CD4-positive, alpha-beta T cell (primary cell): ENCODE measurements at regions of chr2 and their contacts with region 1.

Region 1: DNA sequence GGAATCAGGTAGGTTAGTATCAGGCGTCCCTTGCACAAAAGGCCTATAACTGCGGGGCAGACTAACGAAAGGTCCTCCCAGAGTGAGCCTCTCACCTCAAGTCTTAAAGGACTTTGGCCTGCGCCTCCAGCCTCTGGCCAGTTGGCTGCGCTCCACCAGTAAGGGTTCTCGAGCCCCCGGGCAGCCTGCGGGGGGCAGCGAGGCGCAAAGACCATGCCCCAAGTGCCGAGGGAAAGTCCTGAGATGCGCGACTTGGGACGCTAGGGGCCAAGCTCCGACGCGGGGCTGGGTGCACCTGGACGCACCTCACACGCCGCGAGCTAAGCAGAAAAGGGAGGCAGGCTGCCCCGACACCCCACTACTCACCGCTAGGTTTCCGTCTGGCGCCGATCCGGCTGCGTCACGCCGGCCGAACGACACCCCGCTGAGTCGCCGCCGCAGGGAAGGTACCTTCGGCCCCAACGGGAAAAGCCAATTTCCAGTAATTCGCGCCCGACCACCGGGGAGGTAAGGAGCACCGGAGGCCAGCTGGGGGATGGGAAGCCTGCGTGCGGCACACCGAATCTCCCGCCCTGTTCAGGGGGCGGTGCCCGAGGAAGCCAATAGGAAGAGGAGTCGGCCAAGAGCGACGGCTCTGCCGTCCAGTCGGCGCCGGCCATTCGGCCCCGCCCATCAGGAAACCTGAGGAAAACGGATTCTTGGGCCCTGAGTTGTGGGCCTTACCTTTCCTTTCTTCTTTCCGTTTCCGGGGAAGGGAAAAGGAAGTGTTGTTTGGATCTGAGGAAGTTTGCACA is at the start of gene ORC2:
- DNase-seq: peak; percentile 87 to 96 (median 90)
- ATAC-seq: peak; percentile 95
- H3K4me3 ChIP-seq: peak within 1 kb of the TSS; percentile 98
- H3K4me3 Mint-ChIP-seq: peak within 1 kb of the TSS; percentile 99
- H3K27ac ChIP-seq: peak within 1 kb of the TSS; percentile 89 to 92
- H3K27ac Mint-ChIP-seq: peak within 1 kb of the TSS; percentile 100
- H3K4me1 ChIP-seq: peaks cover 25% of the 10 kb centered on the region
- H3K4me1 Mint-ChIP-seq: peaks cover 73% of the 10 kb centered on the region
- H3K27me3 ChIP-seq: no peaks in the 10 kb centered on the region
- H3K27me3 Mint-ChIP-seq: no peaks in the 10 kb centered on the region
- CTCF ChIP-seq: peak; percentile 74
- total RNA-seq, gene ORC2: 25.0 to 26.6 TPM

Region 2: DNA sequence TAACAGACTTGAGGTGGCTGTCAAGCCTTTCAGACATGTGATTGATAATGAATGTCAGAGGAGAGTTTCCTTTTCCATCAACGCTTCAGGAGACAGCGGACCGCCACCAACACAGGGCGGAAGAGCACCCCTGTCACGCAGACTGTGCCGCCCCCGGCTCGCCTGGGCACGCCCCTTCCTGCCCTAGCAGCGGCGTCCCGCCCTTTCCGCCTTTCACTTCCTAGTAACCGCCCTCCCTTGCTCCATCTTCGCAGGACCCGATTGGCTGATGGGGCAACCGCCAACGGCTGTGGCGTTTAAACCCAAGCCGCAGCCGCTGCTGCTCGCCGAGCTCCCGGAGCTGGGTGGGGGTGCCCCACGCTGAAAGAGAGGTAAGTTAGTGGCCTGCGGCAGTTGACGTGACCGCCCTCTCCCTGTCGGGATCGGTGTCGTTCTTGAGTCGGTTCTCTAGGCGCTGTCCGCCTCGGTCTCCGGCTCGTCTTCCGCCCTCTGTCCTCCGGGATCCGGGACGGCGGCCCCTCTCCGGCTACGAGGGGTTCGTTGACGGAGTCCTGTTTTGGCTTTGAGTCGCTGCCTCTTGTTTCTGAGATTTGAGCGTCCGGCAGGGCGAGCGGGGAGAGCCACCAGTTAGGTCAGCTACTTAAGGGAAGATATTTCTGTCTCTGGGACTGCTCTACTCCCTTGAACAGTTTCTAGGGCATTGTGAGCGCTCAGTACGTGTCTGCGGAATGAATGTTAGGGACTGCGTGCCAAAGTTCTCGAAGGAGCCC is 437.3 kb before region 1 on chr2 and contains the start of gene SGO2:
- CTCF ChIA-PET with region 1: no interaction called
- POLR2A ChIA-PET with region 1: no interaction called
- intact Hi-C with region 1: loop called in 1 of 2 experiments (anchors 10 kb)
- DNase-seq: peak; percentile 90 to 98 (median 94)
- ATAC-seq: peak; percentile 99
- H3K4me3 ChIP-seq: peak within 1 kb of the TSS; percentile 71
- H3K4me3 Mint-ChIP-seq: peak within 1 kb of the TSS; percentile 96
- H3K27ac ChIP-seq: peak within 1 kb of the TSS in 1 of 2 donors; percentile 0
- H3K27ac Mint-ChIP-seq: peak within 1 kb of the TSS; percentile 83
- H3K4me1 ChIP-seq: peaks cover 9% of the 10 kb centered on the region
- H3K4me1 Mint-ChIP-seq: peaks cover 13% of the 10 kb centered on the region
- H3K27me3 ChIP-seq: no peaks in the 10 kb centered on the region
- H3K27me3 Mint-ChIP-seq: no peaks in the 10 kb centered on the region
- CTCF ChIP-seq: no peak
- total RNA-seq, gene SGO2: 0.64 to 0.74 TPM

Region 3: DNA sequence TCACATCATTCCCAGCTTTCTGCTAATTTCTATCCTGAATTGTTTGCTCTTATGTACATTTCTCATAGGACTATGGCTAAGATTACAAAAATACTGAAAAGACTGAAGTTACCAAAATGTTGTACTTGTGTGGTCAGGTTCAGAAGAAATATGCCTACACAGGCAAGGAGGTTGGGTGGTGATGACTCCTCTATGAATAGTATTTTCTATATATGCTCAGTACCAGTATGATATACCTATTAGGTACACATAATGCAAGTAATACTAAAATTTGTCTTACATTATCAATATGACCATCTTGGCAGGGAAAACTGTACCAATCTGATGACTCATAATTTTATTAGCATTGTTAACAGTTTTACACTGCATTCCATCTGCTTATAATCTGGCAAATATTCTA is 12.4 kb after region 1 on chr2:
- CTCF ChIA-PET with region 1: interaction called, 14 read pairs
- POLR2A ChIA-PET with region 1: interaction called, 30 read pairs
- intact Hi-C with region 1: no loop called
- DNase-seq: no peak
- ATAC-seq: no peak
- H3K4me3 ChIP-seq: no peak overlapping the region
- H3K4me3 Mint-ChIP-seq: no peak overlapping the region
- H3K27ac ChIP-seq: no peak overlapping the region
- H3K27ac Mint-ChIP-seq: no peak overlapping the region
- H3K4me1 ChIP-seq: no peaks in the 10 kb centered on the region
- H3K4me1 Mint-ChIP-seq: no peaks in the 10 kb centered on the region
- H3K27me3 ChIP-seq: no peaks in the 10 kb centered on the region
- H3K27me3 Mint-ChIP-seq: no peaks in the 10 kb centered on the region
- CTCF ChIP-seq: no peak

Region 4: DNA sequence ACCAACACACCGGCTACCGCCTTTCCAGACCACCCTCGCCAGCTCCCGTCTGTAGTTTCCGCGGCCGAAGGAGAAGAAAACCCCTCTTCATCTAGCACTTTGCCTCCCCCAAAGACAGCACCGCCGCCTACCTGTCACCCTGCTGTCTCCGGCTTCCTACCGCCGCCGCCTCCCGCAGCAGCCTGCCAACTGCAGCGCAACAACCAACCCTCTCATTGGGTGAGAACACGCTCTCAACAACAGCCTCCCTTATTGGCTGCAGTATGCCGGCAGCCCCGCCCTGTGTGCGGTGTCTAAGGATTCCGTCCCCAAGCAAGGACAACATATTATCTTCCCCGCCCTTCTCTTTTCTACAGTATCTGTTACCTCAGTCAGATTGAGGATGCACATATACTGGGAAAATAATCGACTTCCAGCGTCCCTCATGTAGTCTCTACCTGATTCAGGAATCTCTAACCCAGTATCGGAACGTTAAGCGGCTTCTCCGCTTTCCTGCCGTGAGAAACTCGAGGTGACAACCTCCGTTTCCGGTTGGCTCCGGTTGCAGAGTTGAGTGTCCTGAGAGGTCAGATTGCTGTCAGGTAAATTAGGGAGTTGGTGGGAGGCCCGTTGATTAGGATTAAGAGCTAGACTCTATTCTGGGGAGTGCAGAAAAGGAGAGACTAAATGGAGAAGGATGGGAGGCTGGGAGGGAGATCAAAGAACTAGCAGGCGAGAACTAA is 108.3 kb after region 1 on chr2 and contains the starts of genes HYCC2 and NDUFB3:
- CTCF ChIA-PET with region 1: interaction called, 30 read pairs
- POLR2A ChIA-PET with region 1: interaction called, 39 read pairs
- intact Hi-C with region 1: loop called (anchors 1 to 5 kb)
- DNase-seq: peak; percentile 85 to 98 (median 90)
- ATAC-seq: peak; percentile 92
- H3K4me3 ChIP-seq: peak within 1 kb of the TSS; percentile 87
- H3K4me3 Mint-ChIP-seq: peak within 1 kb of the TSS; percentile 99
- H3K27ac ChIP-seq: peak within 1 kb of the TSS; percentile 84 to 93
- H3K27ac Mint-ChIP-seq: peak within 1 kb of the TSS; percentile 97
- H3K4me1 ChIP-seq: peaks cover 18% of the 10 kb centered on the region
- H3K4me1 Mint-ChIP-seq: peaks cover 50% of the 10 kb centered on the region
- H3K27me3 ChIP-seq: no peaks in the 10 kb centered on the region
- H3K27me3 Mint-ChIP-seq: no peaks in the 10 kb centered on the region
- CTCF ChIP-seq: peak; percentile 39
- total RNA-seq, gene HYCC2: 29.2 to 30.7 TPM
- total RNA-seq, gene NDUFB3: 10.1 to 13.6 TPM

Region 5: GRCh38 chr2:201171259-201171814 is 208.0 kb after region 1 on chr2:
- CTCF ChIA-PET with region 1: interaction called, 4 read pairs
- POLR2A ChIA-PET with region 1: no interaction called
- intact Hi-C with region 1: loop called in 1 of 2 experiments (anchors 5 kb)
- DNase-seq: no peak
- ATAC-seq: no peak
- H3K4me3 ChIP-seq: no peak overlapping the region
- H3K4me3 Mint-ChIP-seq: no peak overlapping the region
- H3K27ac ChIP-seq: no peak overlapping the region
- H3K27ac Mint-ChIP-seq: peak overlapping the region; percentile 51
- H3K4me1 ChIP-seq: no peaks in the 10 kb centered on the region
- H3K4me1 Mint-ChIP-seq: no peaks in the 10 kb centered on the region
- H3K27me3 ChIP-seq: no peaks in the 10 kb centered on the region
- H3K27me3 Mint-ChIP-seq: no peaks in the 10 kb centered on the region
- CTCF ChIP-seq: no peak